Endothelial cell of umbilical vein (primary cell): ENCODE measurements at regions of chr10 and their contacts with region 1.

Region 1: GRCh38 chr10:124418726-124419501 is at the start of gene OAT:
- DNase-seq: peak; percentile 96
- H3K4me3 ChIP-seq: peak within 1 kb of the TSS; percentile 75 to 86 (median 77)
- H3K27ac ChIP-seq: peak within 1 kb of the TSS; percentile 55
- H3K4me1 ChIP-seq: peaks cover 2% of the 10 kb centered on the region
- H3K27me3 ChIP-seq: peaks cover 0 to 6% of the 10 kb centered on the region in 2 experiments
- CTCF ChIP-seq: peak in 1 of 2 donors; percentile 31
- POLR2A ChIP-seq: peak; percentile 99
- total RNA-seq, gene OAT: 90.1 and 90.8 TPM in 2 replicates

Region 2: GRCh38 chr10:123154092-123154921 is 1264.6 kb before region 1 on chr10 and contains the start of gene BUB3:
- CTCF ChIA-PET with region 1: no interaction called
- POLR2A ChIA-PET with region 1: no interaction called
- dilution Hi-C with region 1: no loop called
- intact Hi-C with region 1: loop called (anchors 1 kb)
- DNase-seq: peak; percentile 100
- H3K4me3 ChIP-seq: peak within 1 kb of the TSS; percentile 61 to 92 (median 90)
- H3K27ac ChIP-seq: peak within 1 kb of the TSS; percentile 81
- H3K4me1 ChIP-seq: peaks cover 48% of the 10 kb centered on the region
- H3K27me3 ChIP-seq: peaks cover 35 to 41% of the 10 kb centered on the region in 2 experiments
- CTCF ChIP-seq: no peak
- POLR2A ChIP-seq: peak; percentile 91
- total RNA-seq, gene BUB3: 178 and 193 TPM in 2 replicates

Region 3: DNA sequence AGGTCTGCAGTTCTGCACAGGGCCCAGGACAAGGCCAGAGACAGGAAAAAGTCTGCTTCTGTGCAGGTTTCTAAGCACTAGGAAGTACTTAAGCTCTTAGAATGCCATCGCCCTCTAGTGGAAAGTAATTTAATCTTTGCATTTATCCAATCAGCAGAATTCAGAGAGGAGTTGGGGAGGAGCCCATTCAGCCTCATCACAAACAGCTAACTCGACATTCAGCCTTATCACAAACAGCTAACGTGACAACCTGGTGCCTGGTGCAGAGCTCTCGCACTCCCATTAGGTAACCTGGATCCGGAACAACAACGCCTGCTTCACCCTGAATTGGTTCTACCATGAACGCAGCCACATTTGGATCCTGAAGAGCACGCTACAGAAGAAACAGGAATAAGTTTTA is 15.4 kb before region 1 on chr10:
- CTCF ChIA-PET with region 1: interaction called, 30 read pairs
- POLR2A ChIA-PET with region 1: no interaction called
- dilution Hi-C with region 1: no loop called
- intact Hi-C with region 1: no loop called
- DNase-seq: peak; percentile 85
- H3K4me3 ChIP-seq: no peak overlapping the region
- H3K27ac ChIP-seq: no peak overlapping the region
- H3K4me1 ChIP-seq: no peaks in the 10 kb centered on the region
- H3K27me3 ChIP-seq: no peaks in the 10 kb centered on the region
- CTCF ChIP-seq: peak; percentile 60 to 64
- POLR2A ChIP-seq: no peak

Region 4: DNA sequence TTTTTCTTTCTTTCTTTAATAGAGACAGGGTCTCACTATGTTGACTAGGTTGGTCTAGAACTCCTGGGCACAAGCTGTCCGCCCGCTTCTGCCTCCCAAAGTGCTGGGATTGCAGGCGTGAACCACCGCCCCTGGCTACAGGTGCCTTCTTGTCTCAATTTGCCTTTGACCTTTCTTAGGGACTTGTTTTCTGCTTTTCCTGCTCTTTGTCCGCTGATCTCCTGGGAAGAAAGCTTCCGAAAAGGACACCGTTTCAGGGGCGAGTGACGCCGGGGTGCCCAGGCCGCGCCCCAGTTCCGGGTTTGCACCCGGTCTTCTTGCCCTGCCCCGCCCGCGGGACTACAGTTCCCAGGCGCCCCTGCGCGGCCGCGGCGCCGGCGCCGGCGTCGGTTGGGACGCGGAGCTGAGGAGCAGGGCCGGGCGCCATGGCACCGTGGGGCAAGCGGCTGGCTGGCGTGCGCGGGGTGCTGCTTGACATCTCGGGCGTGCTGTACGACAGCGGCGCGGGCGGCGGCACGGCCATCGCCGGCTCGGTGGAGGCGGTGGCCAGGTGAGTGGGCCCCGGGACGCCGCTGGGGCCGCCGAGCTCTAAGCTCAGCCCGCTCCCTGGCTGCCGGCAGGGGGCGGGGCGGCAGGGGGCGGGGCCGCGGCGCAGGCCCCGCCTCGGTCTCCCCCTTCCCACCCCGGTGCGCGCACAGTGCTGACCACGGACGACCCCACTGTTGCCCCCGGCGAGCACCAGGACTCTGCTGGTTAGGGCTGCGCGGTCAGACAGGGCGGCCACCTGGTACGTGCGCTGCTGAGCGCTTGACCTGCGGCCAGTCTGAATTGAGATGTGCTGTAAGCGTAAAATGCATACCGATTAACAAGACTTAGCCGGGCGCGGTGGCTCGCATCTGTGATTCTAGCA is 42.8 kb after region 1 on chr10 and contains the start of gene LHPP:
- CTCF ChIA-PET with region 1: no interaction called
- POLR2A ChIA-PET with region 1: interaction called, 3 read pairs
- dilution Hi-C with region 1: no loop called
- intact Hi-C with region 1: loop called (anchors 1 kb)
- DNase-seq: peak; percentile 85
- H3K4me3 ChIP-seq: peak within 1 kb of the TSS; percentile 33 to 88 (median 76)
- H3K27ac ChIP-seq: no peak within 1 kb of the TSS
- H3K4me1 ChIP-seq: no peaks in the 10 kb centered on the region
- H3K27me3 ChIP-seq: peaks cover 2 to 3% of the 10 kb centered on the region in 2 experiments
- CTCF ChIP-seq: peak; percentile 8 to 14
- POLR2A ChIP-seq: peak; percentile 72
- total RNA-seq, gene LHPP: 4.2 and 5.8 TPM in 2 replicates